Activated CD4-positive, alpha-beta T cell treated with anti-CD3 and anti-CD28 coated beads for 36 hours (primary cell): ENCODE measurements at regions of chr5 and their contacts with region 1.

Region 1: DNA sequence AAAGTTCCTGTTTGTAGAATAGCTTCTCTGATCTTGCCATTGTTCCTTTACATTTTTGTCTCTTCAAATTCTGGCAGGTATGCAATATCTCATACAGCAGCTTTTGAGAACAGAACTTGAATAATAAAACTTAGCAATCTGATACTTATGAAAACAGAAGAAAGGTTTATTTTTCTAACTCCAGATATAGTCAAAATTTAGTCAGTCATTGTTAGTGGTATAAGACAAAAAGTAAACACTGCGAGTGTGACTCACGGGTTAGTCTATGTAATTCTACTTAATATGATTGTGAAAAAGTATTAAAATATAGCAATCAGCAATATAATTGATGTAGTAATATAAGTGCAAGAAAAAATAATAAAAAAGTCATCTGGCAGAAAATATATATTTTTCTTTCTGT is 910.4 kb downstream of the DNAH5 start:
- DNase-seq: no peak
- ATAC-seq: no peak
- H3K4me3 Mint-ChIP-seq: no peak overlapping the region
- H3K27ac Mint-ChIP-seq: no peak overlapping the region
- H3K4me1 Mint-ChIP-seq: no peaks in the 10 kb centered on the region
- H3K27me3 Mint-ChIP-seq: no peaks in the 10 kb centered on the region

Region 2: DNA sequence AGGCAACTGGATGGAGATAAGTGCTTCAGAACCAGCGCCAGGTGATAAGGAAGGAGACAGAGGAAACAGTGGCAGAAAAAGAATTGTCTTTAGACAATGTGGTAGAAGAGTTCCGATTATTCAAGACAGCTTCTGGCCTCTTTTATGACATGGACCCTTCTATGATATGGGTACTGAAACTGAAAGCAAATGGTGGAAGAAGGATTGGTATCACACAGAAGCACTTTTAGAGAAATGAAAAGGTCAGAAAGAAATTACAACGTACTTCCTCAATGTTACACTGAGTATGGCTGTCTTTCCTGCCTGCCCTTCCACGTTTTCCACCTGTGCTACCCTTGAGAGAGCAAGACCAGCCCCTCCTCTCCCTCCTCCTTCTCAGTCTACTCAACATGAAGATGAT is 48.9 kb before region 1 on chr5:
- CTCF ChIA-PET with region 1: no interaction called
- POLR2A ChIA-PET with region 1: no interaction called
- intact Hi-C with region 1: loop called in 1 of 2 experiments (anchors 2 kb)
- DNase-seq: no peak
- ATAC-seq: no peak
- H3K4me3 Mint-ChIP-seq: no peak overlapping the region
- H3K27ac Mint-ChIP-seq: no peak overlapping the region
- H3K4me1 Mint-ChIP-seq: no peaks in the 10 kb centered on the region
- H3K27me3 Mint-ChIP-seq: no peaks in the 10 kb centered on the region

Region 3: DNA sequence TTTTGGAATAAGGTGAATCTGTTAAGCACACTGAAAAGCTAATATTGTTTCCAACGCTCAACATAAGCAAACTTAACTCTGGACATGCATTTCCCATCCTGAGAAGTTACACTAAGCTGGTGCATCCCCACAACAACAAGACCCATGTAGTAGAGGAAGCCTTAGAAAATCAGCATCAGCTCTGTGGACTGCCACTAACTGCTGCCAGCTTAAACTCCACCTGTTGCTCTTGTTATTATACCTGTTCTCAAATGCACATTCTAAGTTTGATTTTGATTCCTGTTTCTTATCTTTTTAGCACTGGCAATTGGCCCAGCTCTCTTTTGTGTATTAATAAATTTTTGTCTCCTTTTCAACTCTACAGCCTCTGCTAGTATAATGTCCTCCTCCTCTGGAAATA is 14.3 kb before region 1 on chr5:
- CTCF ChIA-PET with region 1: no interaction called
- POLR2A ChIA-PET with region 1: no interaction called
- intact Hi-C with region 1: no loop called
- DNase-seq: no peak
- ATAC-seq: no peak
- H3K4me3 Mint-ChIP-seq: no peak overlapping the region
- H3K27ac Mint-ChIP-seq: no peak overlapping the region
- H3K4me1 Mint-ChIP-seq: no peaks in the 10 kb centered on the region
- H3K27me3 Mint-ChIP-seq: no peaks in the 10 kb centered on the region